ENCODE measurements at regions of chr1 and their contacts with region 1.

Region 1: DNA sequence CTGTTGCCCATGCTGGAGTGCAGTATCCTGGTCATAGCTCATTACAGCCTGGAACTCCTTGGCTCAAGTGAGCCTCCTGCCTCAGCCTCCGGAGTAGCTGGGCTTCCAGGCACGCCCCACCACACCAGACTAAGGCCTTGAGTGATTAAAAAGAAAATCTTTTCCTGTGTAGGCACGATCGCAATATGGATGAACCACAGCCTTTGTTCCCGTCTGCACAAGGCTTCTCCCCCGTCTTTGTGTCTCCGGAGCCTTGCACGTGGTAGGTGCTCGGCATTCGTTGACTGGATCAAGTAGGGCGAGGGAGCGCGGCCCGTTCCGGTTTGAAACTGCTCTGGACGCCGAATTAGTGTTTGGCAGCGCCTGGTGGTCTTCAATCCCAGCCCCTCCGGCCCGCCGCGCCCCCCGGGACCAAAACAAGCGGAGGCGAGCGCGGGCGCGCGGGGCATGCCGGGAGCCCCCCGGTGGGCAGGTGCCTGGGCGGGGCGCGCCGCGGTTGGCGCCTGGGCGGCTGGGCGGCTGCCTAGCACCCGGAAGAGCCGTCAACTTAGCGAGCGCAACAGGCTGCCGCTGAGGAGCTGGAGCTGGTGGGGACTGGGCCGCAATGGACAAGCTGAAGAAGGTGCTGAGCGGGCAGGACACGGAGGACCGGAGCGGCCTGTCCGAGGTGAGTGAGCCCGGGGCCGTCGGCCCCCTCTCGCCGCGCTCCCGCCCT is at the start of gene SFT2D2:
- DNase-seq: peak; percentile 78 to 85 (median 81)
- H3K4me3 ChIP-seq: peak within 1 kb of the TSS; percentile 70 to 84
- H3K4me3 Mint-ChIP-seq: peak within 1 kb of the TSS; percentile 95 to 98 (median 96)
- H3K27ac ChIP-seq: peak within 1 kb of the TSS; percentile 80
- H3K27ac Mint-ChIP-seq: peak within 1 kb of the TSS; percentile 87 to 98 (median 96)
- H3K4me1 ChIP-seq: peaks cover 31% of the 10 kb centered on the region
- H3K4me1 Mint-ChIP-seq: peaks cover 25 to 48% (median 38%) of the 10 kb centered on the region in 4 donors
- H3K27me3 ChIP-seq: no peaks in the 10 kb centered on the region
- H3K27me3 Mint-ChIP-seq: peaks cover 2% of the 10 kb centered on the region in 2 donors
- total RNA-seq, gene SFT2D2: 61.7 to 63.2 TPM

Region 2: GRCh38 chr1:168136709-168137514 is 88.7 kb before region 1 on chr1 and contains the start of gene GPR161:
- CTCF ChIA-PET with region 1: no interaction called
- POLR2A ChIA-PET with region 1: no interaction called
- intact Hi-C with region 1: loop called (anchors 5 kb)
- DNase-seq: peak; percentile 8 to 39 (median 15)
- H3K4me3 ChIP-seq: peak within 1 kb of the TSS; percentile 31 to 57
- H3K4me3 Mint-ChIP-seq: peak within 1 kb of the TSS; percentile 90 to 99 (median 95)
- H3K27ac ChIP-seq: no peak within 1 kb of the TSS
- H3K27ac Mint-ChIP-seq: peak within 1 kb of the TSS; percentile 77 to 95 (median 85)
- H3K4me1 ChIP-seq: peaks cover 15% of the 10 kb centered on the region
- H3K4me1 Mint-ChIP-seq: peaks cover 12 to 30% (median 15%) of the 10 kb centered on the region in 4 donors
- H3K27me3 ChIP-seq: peaks cover 16% of the 10 kb centered on the region
- H3K27me3 Mint-ChIP-seq: peaks cover 23 to 31% of the 10 kb centered on the region in 2 donors
- total RNA-seq, gene GPR161: 0.12 TPM in 1 of 2 experiments, not detected in the other

Region 3: DNA sequence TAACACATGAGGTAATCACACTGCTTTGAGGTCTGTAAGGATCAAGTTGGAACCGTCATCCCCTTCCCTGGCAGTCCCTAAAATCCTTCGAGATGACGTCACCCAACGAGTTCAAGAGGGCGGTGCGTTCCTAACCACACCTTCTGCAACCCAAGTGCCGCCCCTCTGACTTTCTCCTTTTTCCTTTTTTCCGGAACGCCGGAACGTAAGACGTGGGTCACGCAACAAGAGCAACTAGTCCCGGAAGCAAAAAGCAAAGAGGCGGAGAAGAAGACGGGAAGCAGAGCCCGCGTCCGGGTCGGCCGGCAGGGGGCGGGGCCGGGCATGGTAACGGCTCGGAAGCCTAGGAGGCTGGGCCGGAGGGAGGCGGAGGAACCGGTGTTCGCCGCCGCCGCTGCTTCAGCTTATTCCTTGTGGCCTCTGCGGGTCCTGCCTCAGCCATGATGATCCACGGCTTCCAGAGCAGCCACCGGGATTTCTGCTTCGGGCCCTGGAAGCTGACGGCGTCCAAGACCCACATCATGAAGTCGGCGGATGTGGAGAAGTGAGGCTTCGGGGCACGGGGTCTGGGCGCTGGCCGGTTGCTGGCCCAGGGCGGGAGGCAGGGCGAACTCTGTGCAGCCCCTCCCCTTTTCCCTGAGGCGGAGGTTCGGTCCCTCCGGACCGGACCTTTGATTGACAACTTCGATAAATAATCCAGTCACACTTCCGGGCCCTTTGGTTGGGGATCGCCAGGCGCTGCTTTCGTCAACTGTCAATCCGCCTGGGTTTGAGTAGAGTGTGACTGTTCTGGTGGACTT is 46.8 kb before region 1 on chr1 and contains the start of gene TIPRL:
- CTCF ChIA-PET with region 1: interaction called, 4 read pairs
- POLR2A ChIA-PET with region 1: interaction called, 9 read pairs
- intact Hi-C with region 1: loop called (anchors 1 kb)
- DNase-seq: peak; percentile 93 to 94 (median 94)
- H3K4me3 ChIP-seq: peak within 1 kb of the TSS; percentile 86 to 99
- H3K4me3 Mint-ChIP-seq: peak within 1 kb of the TSS in 2 of 8 donors; percentile 18 to 26
- H3K27ac ChIP-seq: peak within 1 kb of the TSS; percentile 95
- H3K27ac Mint-ChIP-seq: no peak within 1 kb of the TSS
- H3K4me1 ChIP-seq: peaks cover 24% of the 10 kb centered on the region
- H3K4me1 Mint-ChIP-seq: peaks cover 3 to 17% (median 9%) of the 10 kb centered on the region in 4 donors
- H3K27me3 ChIP-seq: no peaks in the 10 kb centered on the region
- H3K27me3 Mint-ChIP-seq: no peaks in the 10 kb centered on the region
- total RNA-seq, gene TIPRL: 23.8 to 28.3 TPM